HEK293 (cell line): ENCODE measurements at regions of chr2 and their contacts with region 1.

Region 1: GRCh38 chr2:26982102-26982742 is 11.8 kb downstream of the MAPRE3 start:
- H3K4me3 ChIP-seq: no peak overlapping the region
- H3K27ac ChIP-seq: no peak overlapping the region
- H3K4me1 ChIP-seq: peaks cover 5% of the 10 kb centered on the region; the same call in 1 of the 2 replicates
- CTCF ChIP-seq: 0 out of 2 replicates have a peak, but pooled peaks have one; percentile 23

Region 2: GRCh38 chr2:26273501-26273900 is 708.7 kb before region 1 on chr2:
- CTCF ChIA-PET with region 1: no interaction called
- POLR2A ChIA-PET with region 1: no interaction called
- H3K4me3 ChIP-seq: no peak overlapping the region
- H3K27ac ChIP-seq: no peak overlapping the region
- H3K4me1 ChIP-seq: peaks cover 12% of the 10 kb centered on the region
- CTCF ChIP-seq: no peak

Region 3: GRCh38 chr2:26970244-26970920 is 11.8 kb before region 1 on chr2 and contains the start of gene MAPRE3:
- CTCF ChIA-PET with region 1: interaction called, 11 read pairs
- POLR2A ChIA-PET with region 1: interaction called, 5 read pairs
- H3K4me3 ChIP-seq: peak within 1 kb of the TSS; percentile 53
- H3K27ac ChIP-seq: no peak within 1 kb of the TSS
- H3K4me1 ChIP-seq: peaks cover 8% of the 10 kb centered on the region; the same call in 1 of the 2 replicates
- CTCF ChIP-seq: no peak